Tibial artery (tissue), 4 donors: ENCODE measurements at regions of chr7 and their contacts with region 1.

Region 1: GRCh38 chr7:44606450-44607254 is at the start of gene OGDH:
- DNase-seq: peak; percentile 99
- H3K4me3 ChIP-seq: peak within 1 kb of the TSS; percentile 73 to 96
- H3K27ac ChIP-seq: peak within 1 kb of the TSS; percentile 92 to 97
- H3K4me1 ChIP-seq: peaks cover 0 to 24% (median 14%) of the 10 kb centered on the region in 4 donors
- H3K27me3 ChIP-seq: no peaks in the 10 kb centered on the region
- CTCF ChIP-seq: peak in 1 of 2 experiments; percentile 5

Region 2: DNA sequence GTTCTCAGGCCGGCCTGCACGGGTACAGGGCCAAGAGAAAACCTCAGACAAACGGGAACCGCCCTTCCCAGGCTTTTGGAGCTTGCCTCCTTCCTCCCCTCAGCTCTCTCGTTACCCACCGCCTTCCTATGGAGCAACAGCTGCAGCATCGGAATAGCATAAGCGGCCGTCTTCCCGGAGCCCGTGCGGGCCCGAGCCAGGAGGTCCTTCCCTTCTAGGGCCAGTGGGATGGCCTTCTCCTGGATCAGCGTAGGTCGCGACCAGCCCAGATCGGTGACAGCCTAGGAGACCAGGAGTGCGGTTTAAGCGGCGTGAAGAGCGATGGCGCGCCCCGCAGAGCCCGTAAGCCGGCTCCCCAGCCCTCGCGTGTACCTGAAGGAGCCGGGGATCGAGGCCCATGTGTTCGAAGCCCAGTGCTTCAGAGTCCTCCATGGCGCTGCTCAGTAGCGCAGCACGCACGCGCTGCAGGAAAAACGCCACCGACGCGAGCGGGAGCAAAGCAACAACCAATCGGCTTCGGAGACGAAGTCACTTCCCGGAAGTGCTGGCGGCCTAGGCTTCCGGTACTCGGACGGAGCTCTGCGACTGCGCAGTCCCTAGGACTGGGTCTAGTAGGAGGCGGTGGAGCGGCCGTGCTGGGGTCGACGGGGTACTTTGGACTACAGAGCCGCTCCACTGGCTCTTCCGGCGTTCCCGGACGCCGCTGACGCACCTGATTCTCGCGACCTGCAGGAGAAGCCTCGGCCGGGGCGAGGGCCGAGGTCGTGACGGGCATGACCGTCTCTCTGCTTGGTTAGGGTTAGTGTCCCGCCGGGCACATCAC is 33.0 kb before region 1 on chr7 and contains the start of gene DDX56:
- intact Hi-C with region 1: no loop called
- DNase-seq: peak; percentile 94 to 96
- H3K4me3 ChIP-seq: peak within 1 kb of the TSS; percentile 79 to 99
- H3K27ac ChIP-seq: peak within 1 kb of the TSS; percentile 94
- H3K4me1 ChIP-seq: peaks cover 0 to 26% (median 22%) of the 10 kb centered on the region in 4 donors
- H3K27me3 ChIP-seq: no peaks in the 10 kb centered on the region
- CTCF ChIP-seq: no peak

Region 3: GRCh38 chr7:44986218-44987053 is 379.8 kb after region 1 on chr7:
- intact Hi-C with region 1: loop called (anchors 10 kb)
- DNase-seq: peak; percentile 88 to 95
- H3K4me3 ChIP-seq: peak overlapping the region; percentile 56 to 61
- H3K27ac ChIP-seq: peak overlapping the region; percentile 94 to 95
- H3K4me1 ChIP-seq: peaks cover 0 to 20% (median 17%) of the 10 kb centered on the region in 4 donors
- H3K27me3 ChIP-seq: no peaks in the 10 kb centered on the region
- CTCF ChIP-seq: no peak

Region 4: DNA sequence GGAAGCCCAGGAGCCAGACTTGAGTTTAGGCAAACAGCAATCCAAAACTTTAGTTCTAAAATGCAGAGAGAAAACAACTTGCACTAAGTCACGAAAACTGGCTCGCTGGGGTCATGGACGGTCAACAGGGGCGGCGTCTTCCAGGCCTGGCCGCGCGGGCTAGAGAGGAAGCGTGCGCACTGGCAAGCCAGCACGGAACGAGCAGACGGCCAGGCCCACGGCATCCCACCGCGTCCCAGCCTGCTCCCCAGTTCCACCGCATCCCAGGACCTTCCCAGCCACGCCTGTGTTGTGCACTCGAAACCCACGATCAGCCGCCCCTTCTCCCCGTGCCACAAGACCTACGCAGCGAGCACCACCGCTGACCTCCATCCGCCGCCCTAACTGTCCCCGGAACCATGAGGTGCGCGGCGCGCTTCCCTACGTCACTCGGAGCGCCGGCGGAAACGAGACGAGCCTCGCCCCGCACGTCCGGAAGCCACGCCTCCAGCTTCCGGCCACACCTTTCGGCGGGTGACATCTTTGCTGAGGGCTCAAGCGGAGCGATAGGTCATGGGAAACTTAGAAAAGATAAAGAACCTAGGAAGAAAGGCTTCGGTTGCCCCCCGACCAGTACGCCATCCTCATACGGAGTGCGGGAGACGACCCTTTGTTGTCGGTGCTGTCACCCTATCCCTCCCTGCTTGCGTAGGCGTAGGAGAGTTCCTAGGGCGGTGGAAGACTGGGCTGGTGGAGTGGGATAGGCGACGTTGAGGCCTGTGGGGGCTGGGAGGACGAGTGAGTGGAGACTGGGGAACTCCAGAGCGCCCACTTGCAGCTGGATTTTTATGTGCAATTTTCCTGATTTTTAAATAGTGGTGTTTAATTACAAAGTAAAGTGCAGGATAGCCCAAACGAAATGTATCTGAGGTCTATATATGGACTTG is 504.9 kb after region 1 on chr7 and contains the start of gene TBRG4:
- intact Hi-C with region 1: loop called (anchors 10 kb)
- DNase-seq: peak; percentile 91 to 95
- H3K4me3 ChIP-seq: peak within 1 kb of the TSS; percentile 72 to 91
- H3K27ac ChIP-seq: peak within 1 kb of the TSS; percentile 90 to 91
- H3K4me1 ChIP-seq: peaks cover 5 to 39% (median 23%) of the 10 kb centered on the region in 4 donors
- H3K27me3 ChIP-seq: no peaks in the 10 kb centered on the region
- CTCF ChIP-seq: peak; percentile 17 to 24